Tibial artery (tissue), 4 donors: ENCODE measurements at regions of chr2 and their contacts with region 1.

Region 1: DNA sequence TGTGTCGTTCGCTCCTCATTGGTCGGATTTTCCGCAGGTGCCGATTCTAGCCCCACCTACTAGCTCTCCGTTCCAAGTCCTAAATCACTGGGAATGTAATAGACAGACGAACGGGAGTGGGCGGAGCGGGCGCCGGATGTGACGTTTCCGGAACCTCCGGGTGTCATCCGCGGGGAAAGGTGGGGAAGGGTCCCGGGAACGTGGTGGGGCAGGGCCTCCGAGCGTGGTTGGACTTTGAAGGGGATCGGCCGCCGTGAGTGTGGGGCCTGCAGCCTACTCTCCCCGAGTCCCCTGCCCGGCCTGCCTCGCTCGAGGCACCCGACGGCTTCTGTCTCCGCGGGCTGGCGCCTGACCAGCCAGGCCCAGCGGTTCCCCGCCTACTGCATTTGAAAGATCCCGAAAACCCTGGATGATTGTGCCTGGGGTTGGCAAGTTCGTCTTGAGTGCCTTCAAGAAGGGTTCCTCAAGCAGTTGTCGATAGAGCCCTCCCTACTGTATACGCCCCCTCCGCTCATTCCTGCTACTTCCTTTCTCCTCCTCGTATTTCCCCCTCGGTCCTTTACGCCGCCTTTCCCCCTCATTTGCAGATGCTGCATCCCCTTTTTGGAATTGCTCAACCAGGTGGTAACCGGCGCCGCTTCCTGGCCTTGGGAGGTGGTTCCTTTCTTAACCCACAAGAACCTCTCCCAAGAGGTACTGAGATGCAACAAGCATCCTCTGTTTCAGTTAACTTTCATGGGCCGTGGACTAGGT is at the start of gene STAMBP:
- DNase-seq: peak; percentile 97 to 98
- H3K4me3 ChIP-seq: peak within 1 kb of the TSS; percentile 72 to 82
- H3K27ac ChIP-seq: peak within 1 kb of the TSS; percentile 92 to 94
- H3K4me1 ChIP-seq: peaks cover 0 to 43% (median 21%) of the 10 kb centered on the region in 4 donors
- H3K27me3 ChIP-seq: no peaks in the 10 kb centered on the region
- CTCF ChIP-seq: no peak

Region 2: DNA sequence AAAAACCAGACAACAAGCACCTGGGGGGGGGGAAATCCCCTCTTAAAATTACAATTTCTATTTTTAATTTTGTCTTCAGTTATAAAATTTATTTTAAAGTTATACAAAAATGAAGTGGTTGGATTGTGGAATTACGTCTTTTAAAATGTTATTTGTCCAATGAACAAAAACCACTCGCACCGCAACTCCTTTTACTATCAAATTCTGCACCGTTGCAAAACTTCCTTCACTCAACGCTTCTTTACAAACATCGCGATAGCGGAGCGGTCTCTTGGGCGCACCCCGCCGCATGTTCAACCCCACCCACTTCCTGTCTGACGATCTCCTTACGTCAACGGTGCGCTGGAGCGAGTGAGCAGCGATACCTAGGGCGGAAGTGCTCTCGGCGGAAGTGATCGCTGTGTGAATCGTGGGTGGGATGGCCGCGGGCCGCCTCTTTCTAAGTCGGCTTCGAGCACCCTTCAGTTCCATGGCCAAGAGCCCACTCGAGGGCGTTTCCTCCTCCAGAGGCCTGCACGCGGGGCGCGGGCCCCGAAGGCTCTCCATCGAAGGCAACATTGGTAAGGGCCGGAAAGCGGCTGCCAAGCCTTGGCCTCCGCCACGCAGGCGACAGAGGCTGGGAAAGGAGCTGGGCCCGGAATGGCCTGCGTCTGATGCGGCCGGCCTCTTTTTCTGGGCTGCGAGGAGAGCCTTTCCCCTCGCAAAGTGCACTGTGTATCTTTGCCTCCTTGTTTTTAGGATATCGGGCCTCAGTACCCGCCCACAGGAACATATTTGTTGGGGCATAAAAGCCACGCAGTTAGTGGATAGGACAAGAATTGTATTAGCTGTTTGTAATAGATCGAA is 97.7 kb after region 1 on chr2 and contains the start of gene DGUOK:
- intact Hi-C with region 1: loop called (anchors 10 kb)
- DNase-seq: peak; percentile 99
- H3K4me3 ChIP-seq: peak within 1 kb of the TSS; percentile 75 to 82
- H3K27ac ChIP-seq: peak within 1 kb of the TSS; percentile 93 to 95
- H3K4me1 ChIP-seq: peaks cover 0 to 48% (median 29%) of the 10 kb centered on the region in 4 donors
- H3K27me3 ChIP-seq: no peaks in the 10 kb centered on the region
- CTCF ChIP-seq: no peak

Region 3: DNA sequence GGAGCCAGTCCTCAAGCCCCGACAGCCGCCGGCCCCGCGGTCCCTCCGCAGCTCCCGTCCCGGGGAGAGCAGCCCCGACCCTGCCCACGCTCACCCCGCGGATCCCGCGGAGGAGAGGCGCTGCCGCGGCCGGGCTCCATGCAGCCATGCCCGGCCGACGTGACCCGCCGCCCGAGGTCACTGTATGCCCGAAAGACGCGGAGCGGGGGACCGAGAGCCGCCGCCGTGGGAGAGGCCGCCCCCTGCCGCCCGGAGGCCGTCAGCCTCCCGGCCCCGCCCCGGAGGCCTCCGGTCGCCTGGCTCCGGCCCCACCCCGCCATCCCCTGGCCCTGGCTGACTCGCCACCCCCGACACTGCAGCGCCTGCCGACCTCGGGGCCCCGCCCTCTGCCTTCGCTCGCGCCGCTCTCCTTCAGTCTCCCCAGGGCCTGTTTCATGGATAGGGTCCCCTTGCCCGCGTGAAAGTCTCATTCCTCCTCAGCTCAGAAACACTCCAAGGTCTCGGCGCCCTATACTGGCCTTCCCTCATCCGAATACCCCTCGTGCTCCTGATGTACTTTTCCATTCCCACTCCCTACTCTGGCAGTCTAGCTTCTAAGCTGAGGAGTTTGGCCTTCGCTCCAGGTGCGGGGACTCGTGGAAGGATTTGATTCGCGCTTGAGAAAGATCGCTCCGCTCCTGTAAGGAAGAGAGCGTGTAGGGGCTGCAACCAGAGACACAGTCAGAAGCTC is 318.9 kb after region 1 on chr2 and contains the start of gene BOLA3:
- intact Hi-C with region 1: loop called (anchors 5 kb)
- DNase-seq: peak; percentile 85 to 91
- H3K4me3 ChIP-seq: peak within 1 kb of the TSS; percentile 77 to 88
- H3K27ac ChIP-seq: peak within 1 kb of the TSS; percentile 72 to 75
- H3K4me1 ChIP-seq: peaks cover 0 to 26% (median 19%) of the 10 kb centered on the region in 4 donors
- H3K27me3 ChIP-seq: no peaks in the 10 kb centered on the region
- CTCF ChIP-seq: peak; percentile 44 to 64

Region 4: GRCh38 chr2:74261204-74261864 is 432.3 kb after region 1 on chr2:
- intact Hi-C with region 1: loop called (anchors 10 kb)
- DNase-seq: peak in 1 of 2 donors; percentile 62
- H3K4me3 ChIP-seq: no peak overlapping the region
- H3K27ac ChIP-seq: no peak overlapping the region
- H3K4me1 ChIP-seq: no peaks in the 10 kb centered on the region
- H3K27me3 ChIP-seq: no peaks in the 10 kb centered on the region
- CTCF ChIP-seq: peak; percentile 52 to 68

Region 5: GRCh38 chr2:74334931-74335333 is 505.9 kb after region 1 on chr2:
- intact Hi-C with region 1: loop called (anchors 10 kb)
- DNase-seq: peak; percentile 73 to 83
- H3K4me3 ChIP-seq: no peak overlapping the region
- H3K27ac ChIP-seq: no peak overlapping the region
- H3K4me1 ChIP-seq: no peaks in the 10 kb centered on the region
- H3K27me3 ChIP-seq: no peaks in the 10 kb centered on the region
- CTCF ChIP-seq: peak; percentile 81 to 96

Region 6: GRCh38 chr2:74414881-74415761 is 586.1 kb after region 1 on chr2:
- intact Hi-C with region 1: no loop called
- DNase-seq: peak; percentile 58 to 77
- H3K4me3 ChIP-seq: peak overlapping the region; percentile 50 to 65
- H3K27ac ChIP-seq: peak overlapping the region; percentile 58
- H3K4me1 ChIP-seq: peaks cover 0 to 35% (median 20%) of the 10 kb centered on the region in 4 donors
- H3K27me3 ChIP-seq: no peaks in the 10 kb centered on the region
- CTCF ChIP-seq: peak in 1 of 2 experiments; percentile 15

Region 7: DNA sequence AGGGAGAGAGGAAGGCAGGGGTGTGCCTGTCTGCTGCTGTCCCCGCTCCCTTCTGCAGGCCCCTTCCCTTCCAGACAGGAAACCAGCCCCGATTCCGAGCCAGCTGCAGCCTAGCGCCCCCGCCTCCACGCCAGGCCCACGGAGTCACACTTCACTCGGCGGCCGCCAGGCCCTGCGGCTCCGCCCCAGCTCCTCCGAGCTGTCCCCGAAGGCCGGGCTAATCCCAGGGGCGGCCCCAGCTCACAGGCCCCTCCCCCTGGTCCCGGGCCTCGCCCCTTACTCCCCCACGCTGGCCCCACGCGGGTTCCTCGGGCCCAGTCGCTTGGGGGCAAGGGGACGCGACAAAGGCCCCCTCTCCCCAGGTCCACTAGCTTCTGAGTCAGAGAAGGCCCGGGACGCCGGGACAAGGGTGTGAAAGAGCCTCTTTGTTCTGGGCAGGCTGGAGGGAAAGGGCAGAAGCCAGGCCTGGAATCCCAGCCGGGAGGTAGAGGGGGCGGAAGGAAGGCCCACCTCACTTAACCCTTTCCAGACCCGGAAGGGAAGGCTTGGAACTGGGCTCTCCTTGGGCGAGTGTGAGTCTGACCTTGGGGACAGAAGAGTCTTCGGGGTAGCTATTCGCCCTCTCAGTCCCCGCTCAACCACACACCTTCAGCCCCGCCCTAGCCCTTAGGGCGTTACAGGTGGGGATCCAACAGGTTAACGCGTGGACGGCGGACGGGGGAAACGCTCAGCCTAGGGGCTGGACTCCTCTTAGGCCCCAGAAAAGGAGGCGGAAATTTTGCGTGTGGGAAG is 611.6 kb after region 1 on chr2:
- intact Hi-C with region 1: no loop called
- DNase-seq: peak; percentile 81 to 92
- H3K4me3 ChIP-seq: peak overlapping the region; percentile 50 to 64
- H3K27ac ChIP-seq: peak overlapping the region; percentile 68 to 76
- H3K4me1 ChIP-seq: peaks cover 0 to 45% (median 21%) of the 10 kb centered on the region in 4 donors
- H3K27me3 ChIP-seq: peaks cover 0 to 13% of the 10 kb centered on the region in 2 donors
- CTCF ChIP-seq: peak; percentile 38 to 49

Region 8: GRCh38 chr2:75007819-75008218 is 1178.8 kb after region 1 on chr2:
- intact Hi-C with region 1: no loop called
- DNase-seq: no peak
- H3K4me3 ChIP-seq: no peak overlapping the region
- H3K27ac ChIP-seq: no peak overlapping the region
- H3K4me1 ChIP-seq: no peaks in the 10 kb centered on the region
- H3K27me3 ChIP-seq: no peaks in the 10 kb centered on the region
- CTCF ChIP-seq: no peak

Region 9: DNA sequence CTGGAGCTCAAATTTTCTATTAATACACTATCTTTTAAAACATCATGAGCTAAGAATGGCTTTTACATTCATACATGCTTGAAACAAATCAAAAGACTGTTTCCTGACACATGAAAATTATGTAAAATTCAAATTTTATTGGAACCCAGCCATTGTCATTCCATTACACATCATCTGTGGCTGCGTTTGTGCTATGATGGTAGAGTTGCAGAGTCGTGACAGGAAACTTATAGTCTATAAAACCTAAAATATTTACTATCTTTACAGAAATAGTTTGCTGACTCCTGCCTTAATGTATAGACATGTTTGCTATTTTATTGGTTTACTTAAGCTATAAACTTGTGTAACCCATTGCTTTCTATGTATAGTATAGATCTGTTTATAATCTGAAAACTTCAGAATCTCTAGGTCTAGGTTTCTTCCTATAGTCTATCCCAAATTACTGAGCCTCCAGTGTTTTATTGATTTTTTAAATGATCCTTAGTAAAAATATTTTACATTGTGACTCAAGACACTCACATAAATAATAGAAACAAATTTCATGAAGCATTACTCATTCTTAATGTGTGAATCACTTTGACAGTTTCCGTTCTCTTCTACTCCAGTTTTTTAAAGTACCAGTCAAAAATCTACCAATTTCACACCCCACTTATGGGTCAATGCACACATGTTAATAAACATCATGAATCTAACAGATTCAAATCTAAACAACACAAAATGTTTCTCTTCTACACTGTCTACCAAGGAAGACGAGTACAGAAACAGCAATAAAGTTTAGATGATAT is 1791.2 kb after region 1 on chr2:
- intact Hi-C with region 1: no loop called
- DNase-seq: no peak
- H3K4me3 ChIP-seq: no peak overlapping the region
- H3K27ac ChIP-seq: no peak overlapping the region
- H3K4me1 ChIP-seq: no peaks in the 10 kb centered on the region
- H3K27me3 ChIP-seq: peaks cover 0 to 6% of the 10 kb centered on the region in 2 donors
- CTCF ChIP-seq: no peak